Heart left ventricle (tissue), 16 donors: ENCODE measurements at regions of chr6 and their contacts with region 1.

Region 1: DNA sequence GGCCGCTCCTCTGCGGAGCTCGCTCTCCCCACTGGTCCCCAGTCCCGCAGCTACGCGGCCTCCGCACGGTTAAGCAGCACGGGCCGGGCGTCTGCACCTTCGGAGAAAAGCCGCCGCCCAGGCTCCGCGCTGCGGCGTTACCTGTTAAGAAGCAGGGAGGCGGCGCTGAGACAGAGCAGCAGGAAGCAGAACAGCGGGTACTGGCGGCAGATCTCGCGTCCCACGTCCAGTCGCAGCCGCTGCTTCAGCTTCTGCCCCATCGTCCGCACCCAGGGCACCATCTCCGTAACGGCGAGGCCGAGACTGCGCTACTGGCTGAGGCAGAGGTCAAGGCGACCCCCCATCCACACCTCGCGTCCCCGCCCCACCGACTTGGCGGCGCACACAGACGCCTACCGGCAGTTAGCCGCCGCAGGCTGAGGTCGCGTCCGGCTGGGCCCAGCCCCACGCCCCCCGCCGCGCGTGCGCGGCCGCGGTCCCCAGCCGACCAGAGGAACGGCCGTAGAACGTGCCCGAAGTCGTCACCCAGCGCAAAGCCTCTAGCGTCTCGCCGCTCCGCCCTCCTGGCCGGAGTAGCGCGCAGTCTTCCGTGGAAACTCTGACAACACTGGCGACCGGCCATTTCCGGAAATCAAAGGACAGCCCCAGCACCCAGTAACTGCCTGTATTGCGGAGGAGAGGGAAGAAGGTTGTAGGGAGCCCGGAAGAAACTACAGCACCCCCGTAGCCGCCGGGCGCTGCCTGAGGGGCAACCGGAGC is at the start of gene SNX14:
- DNase-seq: peak; percentile 97 to 98 (median 97)
- ATAC-seq: peak; percentile 96 to 99 (median 97)
- H3K4me3 ChIP-seq: peak within 1 kb of the TSS; percentile 67 to 94 (median 76)
- H3K27ac ChIP-seq: peak within 1 kb of the TSS; percentile 86 to 98 (median 93)
- H3K4me1 ChIP-seq: peaks cover 0 to 31% (median 20%) of the 10 kb centered on the region in 12 donors
- H3K27me3 ChIP-seq: no peaks in the 10 kb centered on the region
- CTCF ChIP-seq: peak in 6 of 12 donors; percentile 5 to 30 (median 14)
- POLR2A ChIP-seq: peak in 1 of 2 donors; percentile 84
- total RNA-seq, gene SNX14: 23.3 to 41.8 (median 31.8) TPM

Region 2: GRCh38 chr6:85628353-85628752 is 34.7 kb after region 1 on chr6:
- intact Hi-C with region 1: loop called in 1 of 10 experiments (anchors 5 kb)
- DNase-seq: no peak
- ATAC-seq: peak in 2 of 4 donors; percentile 13 to 43
- H3K4me3 ChIP-seq: no peak overlapping the region
- H3K27ac ChIP-seq: no peak overlapping the region
- H3K4me1 ChIP-seq: peaks cover 0 to 54% (median 15%) of the 10 kb centered on the region in 12 donors
- H3K27me3 ChIP-seq: no peaks in the 10 kb centered on the region
- CTCF ChIP-seq: no peak
- POLR2A ChIP-seq: no peak

Region 3: DNA sequence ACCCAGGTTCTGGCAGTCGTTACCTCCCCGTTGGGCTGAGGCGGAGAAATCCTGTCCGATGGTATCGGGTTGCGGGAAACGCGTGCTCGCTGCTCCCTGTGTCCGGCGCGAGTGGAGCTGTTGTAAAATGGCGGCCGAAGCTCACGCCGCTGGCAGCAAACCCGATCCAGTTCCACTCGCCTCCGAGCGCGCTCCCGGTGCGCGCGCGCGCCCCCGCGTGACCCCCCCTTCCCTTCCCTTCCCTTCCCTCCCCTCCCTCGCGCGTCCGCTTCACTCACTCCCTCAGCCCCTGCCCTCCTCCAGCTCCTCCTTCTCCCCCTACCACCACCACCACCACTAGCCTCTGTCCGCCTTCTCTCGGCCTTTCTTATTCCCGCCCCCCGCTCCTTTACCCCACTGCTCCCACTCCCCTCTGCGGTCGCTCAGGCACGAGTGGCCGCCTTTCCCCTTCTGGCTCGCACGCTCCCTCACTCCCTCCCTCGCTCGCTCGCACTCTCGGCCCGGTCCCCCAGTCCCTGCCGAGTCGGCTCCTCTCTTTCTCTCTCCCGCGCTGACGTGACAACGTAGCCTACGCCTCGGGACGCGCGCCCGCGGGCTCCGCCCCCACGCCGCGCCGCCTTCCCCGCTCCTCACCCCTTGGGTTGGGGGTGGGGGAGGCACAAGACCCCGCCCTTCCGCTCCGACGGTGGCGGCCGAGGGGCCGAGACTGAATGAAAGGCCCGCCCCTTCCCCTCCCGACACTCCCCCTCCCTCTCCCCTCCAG is 49.3 kb after region 1 on chr6 and contains the start of gene SYNCRIP:
- intact Hi-C with region 1: loop called in 8 of 10 experiments (anchors 1 to 5 kb)
- DNase-seq: peak; percentile 99 to 100 (median 99)
- ATAC-seq: peak; percentile 90 to 95 (median 94)
- H3K4me3 ChIP-seq: peak within 1 kb of the TSS; percentile 64 to 99 (median 93)
- H3K27ac ChIP-seq: peak within 1 kb of the TSS; percentile 95 to 100 (median 99)
- H3K4me1 ChIP-seq: peaks cover 4 to 47% (median 36%) of the 10 kb centered on the region in 12 donors
- H3K27me3 ChIP-seq: no peaks in the 10 kb centered on the region
- CTCF ChIP-seq: no peak
- POLR2A ChIP-seq: peak; percentile 23 to 86
- total RNA-seq, gene SYNCRIP: 28.4 to 71.0 (median 59.0) TPM